Common myeloid progenitor, CD34-positive (primary cell): ENCODE measurements at regions of chr16 and their contacts with region 1.

Region 1: GRCh38 chr16:53022374-53022773 is 30.3 kb downstream of the CHD9NB start:
- DNase-seq: peak; percentile 25 to 57 (median 51)
- H3K4me3 ChIP-seq: no peak overlapping the region
- H3K27ac ChIP-seq: no peak overlapping the region
- H3K4me1 ChIP-seq: no peaks in the 10 kb centered on the region
- H3K27me3 ChIP-seq: peaks cover 0 to 2% (median 0%) of the 10 kb centered on the region in 5 experiments

Region 2: GRCh38 chr16:52191531-52192134 is 830.7 kb before region 1 on chr16:
- CTCF ChIA-PET with region 1: interaction called, 16 read pairs
- POLR2A ChIA-PET with region 1: no interaction called
- DNase-seq: peak; percentile 37 to 66 (median 52)
- H3K4me3 ChIP-seq: no peak overlapping the region
- H3K27ac ChIP-seq: no peak overlapping the region
- H3K4me1 ChIP-seq: no peaks in the 10 kb centered on the region
- H3K27me3 ChIP-seq: no peaks in the 10 kb centered on the region

Region 3: GRCh38 chr16:52994942-52995341 is 27.4 kb before region 1 on chr16:
- CTCF ChIA-PET with region 1: no interaction called
- POLR2A ChIA-PET with region 1: no interaction called
- DNase-seq: no peak
- H3K4me3 ChIP-seq: no peak overlapping the region
- H3K27ac ChIP-seq: no peak overlapping the region
- H3K4me1 ChIP-seq: no peaks in the 10 kb centered on the region
- H3K27me3 ChIP-seq: no peaks in the 10 kb centered on the region

Region 4: GRCh38 chr16:53007095-53007494 is 15.3 kb before region 1 on chr16:
- CTCF ChIA-PET with region 1: interaction called, 19 read pairs
- POLR2A ChIA-PET with region 1: no interaction called
- DNase-seq: no peak
- H3K4me3 ChIP-seq: no peak overlapping the region
- H3K27ac ChIP-seq: no peak overlapping the region
- H3K4me1 ChIP-seq: no peaks in the 10 kb centered on the region
- H3K27me3 ChIP-seq: peaks cover 0 to 5% (median 0%) of the 10 kb centered on the region in 5 experiments